ENCODE measurements at regions of chr7 and their contacts with region 1.

Region 1: GRCh38 chr7:155965015-155965414 is 152.8 kb upstream of the SHH start:
- DNase-seq: no peak
- H3K4me3 ChIP-seq: no peak overlapping the region
- H3K27ac ChIP-seq: no peak overlapping the region
- H3K4me1 ChIP-seq: no peaks in the 10 kb centered on the region
- H3K27me3 ChIP-seq: no peaks in the 10 kb centered on the region
- CTCF ChIP-seq: no peak
- POLR2A ChIP-seq: no peak

Region 2: DNA sequence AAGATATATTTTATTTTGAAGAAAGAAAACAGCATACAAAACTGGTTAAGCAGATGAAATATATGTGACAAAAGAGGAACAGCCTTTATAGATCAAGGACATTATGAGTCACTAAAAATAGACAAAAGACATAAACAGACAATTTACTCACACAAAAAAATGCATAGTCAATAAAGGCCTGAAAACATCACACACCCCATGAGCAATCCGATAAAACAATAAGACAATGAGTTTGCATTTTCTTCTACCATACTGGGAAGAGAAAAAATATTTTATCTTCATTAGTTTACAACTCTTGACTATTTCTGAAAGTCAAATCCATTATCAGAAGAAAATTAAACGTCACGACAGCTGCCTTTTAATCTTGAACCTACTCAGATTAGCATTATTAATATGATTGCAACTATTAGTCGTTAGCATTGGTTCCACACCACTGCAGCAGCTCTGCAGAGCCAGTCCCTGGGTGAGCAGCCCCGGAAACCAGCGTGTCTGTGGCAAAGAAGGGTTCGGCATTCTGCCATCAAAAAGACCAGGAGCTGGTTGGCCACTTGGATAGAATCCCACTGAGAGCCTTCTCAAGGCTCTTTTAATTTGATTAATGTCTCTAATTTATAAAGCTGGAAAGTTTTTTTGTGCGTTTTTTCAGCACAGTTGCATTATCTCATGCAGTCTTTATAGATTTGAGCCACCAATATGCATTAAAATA is 152.7 kb after region 1 on chr7:
- intact Hi-C with region 1: loop called (anchors 5 kb)
- DNase-seq: no peak
- H3K4me3 ChIP-seq: no peak overlapping the region
- H3K27ac ChIP-seq: no peak overlapping the region
- H3K4me1 ChIP-seq: no peaks in the 10 kb centered on the region
- H3K27me3 ChIP-seq: no peaks in the 10 kb centered on the region
- CTCF ChIP-seq: no peak
- POLR2A ChIP-seq: no peak